Breast epithelium (tissue), 4 donors: ENCODE measurements at regions of chr2 and their contacts with region 1.

Region 1: DNA sequence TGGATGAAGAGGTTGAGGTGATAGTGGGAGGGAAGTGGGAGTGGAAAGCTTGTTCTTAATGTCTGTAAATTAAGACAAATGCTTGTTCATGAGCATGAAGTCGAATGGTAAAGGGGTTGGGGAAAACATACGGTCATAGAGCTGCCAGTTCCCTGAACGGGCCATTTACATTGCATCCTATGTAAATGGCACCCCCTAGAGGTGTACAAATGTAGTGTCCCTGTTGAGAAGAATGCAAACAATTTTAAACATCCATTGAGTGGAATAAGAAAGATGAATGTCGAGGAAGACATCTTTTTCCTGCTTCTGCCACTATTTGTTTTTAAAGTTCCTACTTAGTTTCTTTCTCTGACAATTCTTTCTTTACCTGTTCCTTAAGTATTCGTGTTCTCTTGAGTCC is 155.7 kb downstream of the RDH14 start:
- DNase-seq: no peak
- H3K4me3 ChIP-seq: no peak overlapping the region
- H3K27ac ChIP-seq: no peak overlapping the region
- H3K4me1 ChIP-seq: no peaks in the 10 kb centered on the region
- H3K27me3 ChIP-seq: no peaks in the 10 kb centered on the region
- CTCF ChIP-seq: no peak
- POLR2A ChIP-seq: no peak

Region 2: DNA sequence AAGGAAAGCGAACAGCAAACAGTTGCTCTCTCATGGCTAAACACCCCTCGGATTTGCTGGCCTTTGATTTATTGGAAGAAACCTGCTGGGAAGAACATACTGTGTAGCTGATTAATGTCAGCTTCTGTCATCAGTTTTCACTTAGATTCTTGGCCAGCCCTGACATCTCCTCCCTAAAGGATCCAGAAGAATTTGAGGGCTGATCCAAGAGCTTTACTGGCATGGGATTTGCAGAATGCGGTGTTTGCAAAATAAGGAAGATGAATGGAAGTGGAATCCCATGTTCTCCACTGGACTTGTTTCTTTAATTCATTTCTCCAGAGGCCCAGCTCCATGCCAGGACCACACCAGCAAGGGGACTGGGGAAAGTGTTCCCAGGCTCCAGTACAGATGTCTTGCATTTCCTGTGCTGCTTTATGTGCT is 75.2 kb after region 1 on chr2:
- intact Hi-C with region 1: loop called (anchors 5 kb)
- DNase-seq: no peak
- H3K4me3 ChIP-seq: no peak overlapping the region
- H3K27ac ChIP-seq: peak overlapping the region in 1 of 2 donors; percentile 55
- H3K4me1 ChIP-seq: no peaks in the 10 kb centered on the region
- H3K27me3 ChIP-seq: no peaks in the 10 kb centered on the region
- CTCF ChIP-seq: no peak
- POLR2A ChIP-seq: no peak